Activated CD8-positive, alpha-beta T cell treated with anti-CD3 and anti-CD28 coated beads, Interleukin-2, amount 10 ng/mL, durations not matched to agents 7 days and 5 days (primary cell): ENCODE measurements at regions of chr6 and their contacts with region 1.

Region 1: GRCh38 chr6:34196126-34196830 is 40.4 kb upstream of the HMGA1 start:
- DNase-seq: peak; percentile 89
- ATAC-seq: peak; percentile 99
- H3K4me3 Mint-ChIP-seq: peak overlapping the region; percentile 75
- H3K27ac Mint-ChIP-seq: peak overlapping the region; percentile 39
- H3K4me1 Mint-ChIP-seq: peaks cover 7% of the 10 kb centered on the region
- H3K27me3 Mint-ChIP-seq: peaks cover 13% of the 10 kb centered on the region

Region 2: GRCh38 chr6:33950472-33950881 is 245.8 kb before region 1 on chr6:
- CTCF ChIA-PET with region 1: no interaction called
- POLR2A ChIA-PET with region 1: no interaction called
- DNase-seq: no peak
- ATAC-seq: no peak
- H3K4me3 Mint-ChIP-seq: no peak overlapping the region
- H3K27ac Mint-ChIP-seq: no peak overlapping the region
- H3K4me1 Mint-ChIP-seq: peaks cover 5% of the 10 kb centered on the region
- H3K27me3 Mint-ChIP-seq: peaks cover 11% of the 10 kb centered on the region

Region 3: GRCh38 chr6:34027445-34027936 is 168.8 kb before region 1 on chr6:
- CTCF ChIA-PET with region 1: no interaction called
- POLR2A ChIA-PET with region 1: no interaction called
- DNase-seq: peak; percentile 69
- ATAC-seq: peak; percentile 69
- H3K4me3 Mint-ChIP-seq: no peak overlapping the region
- H3K27ac Mint-ChIP-seq: no peak overlapping the region
- H3K4me1 Mint-ChIP-seq: no peaks in the 10 kb centered on the region
- H3K27me3 Mint-ChIP-seq: peaks cover 3% of the 10 kb centered on the region

Region 4: DNA sequence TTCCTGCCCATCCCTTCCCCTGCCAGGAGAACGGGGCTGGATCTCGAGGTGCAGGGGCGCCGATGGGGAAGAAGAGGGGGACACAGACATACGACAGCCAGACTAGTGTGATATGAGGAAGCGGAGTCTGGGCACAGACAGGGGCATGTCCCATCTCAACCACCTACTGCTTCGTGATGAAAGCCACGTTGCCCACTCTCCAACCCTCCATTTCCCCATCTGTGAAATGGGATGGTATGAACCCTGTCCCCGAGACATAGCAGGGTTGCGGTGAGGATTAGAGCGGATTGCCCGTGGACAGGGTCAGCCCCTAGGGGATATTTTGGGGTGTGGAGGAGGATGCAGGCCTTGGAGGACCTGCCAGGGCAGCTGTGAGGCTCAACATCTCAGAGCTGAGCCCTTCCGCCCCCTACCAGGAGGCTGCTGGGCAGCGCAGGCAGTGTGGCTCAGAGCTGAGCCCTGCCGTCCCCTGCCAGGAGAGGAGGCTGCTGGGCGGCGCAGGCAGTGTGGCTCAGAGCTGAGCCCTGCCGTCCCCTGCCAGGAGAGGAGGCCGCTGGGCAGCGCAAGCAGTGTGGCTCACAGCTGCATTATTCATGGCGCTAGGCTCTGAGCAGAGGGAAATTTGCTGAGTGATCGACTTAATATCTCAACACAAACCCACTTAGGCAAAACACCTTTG is 122.1 kb before region 1 on chr6:
- CTCF ChIA-PET with region 1: no interaction called
- POLR2A ChIA-PET with region 1: no interaction called
- DNase-seq: no peak
- ATAC-seq: no peak
- H3K4me3 Mint-ChIP-seq: no peak overlapping the region
- H3K27ac Mint-ChIP-seq: no peak overlapping the region
- H3K4me1 Mint-ChIP-seq: no peaks in the 10 kb centered on the region
- H3K27me3 Mint-ChIP-seq: no peaks in the 10 kb centered on the region

Region 5: GRCh38 chr6:34182751-34183531 is 13.3 kb before region 1 on chr6:
- CTCF ChIA-PET with region 1: interaction called, 19 read pairs
- POLR2A ChIA-PET with region 1: interaction called, 3 read pairs
- DNase-seq: peak; percentile 83
- ATAC-seq: peak; percentile 90
- H3K4me3 Mint-ChIP-seq: peak overlapping the region; percentile 54
- H3K27ac Mint-ChIP-seq: peak overlapping the region; percentile 87
- H3K4me1 Mint-ChIP-seq: peaks cover 17% of the 10 kb centered on the region
- H3K27me3 Mint-ChIP-seq: peaks cover 5% of the 10 kb centered on the region